MCF 10A (cell line): ENCODE measurements at regions of chr2 and their contacts with region 1.

Region 1: DNA sequence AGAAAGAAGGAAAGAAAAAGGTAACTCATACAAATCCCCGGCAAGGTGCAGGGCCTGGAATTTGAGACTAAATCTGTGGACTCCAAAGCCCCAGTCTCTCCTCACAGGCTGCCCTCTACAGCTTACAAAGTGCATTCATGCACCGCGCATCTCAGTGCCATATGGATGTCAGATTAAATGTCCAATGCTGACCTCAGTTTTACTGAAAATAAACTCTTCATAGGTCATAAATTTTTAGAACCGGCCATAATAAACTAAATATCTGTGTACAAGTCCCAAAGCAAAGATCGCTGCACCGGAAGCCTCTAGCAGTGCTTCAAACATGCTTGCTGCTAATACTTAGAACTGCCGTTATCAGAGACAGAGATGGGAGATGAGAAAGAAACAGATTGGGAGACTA is 17.7 kb downstream of the ST6GAL2 start:
- DNase-seq: no peak
- H3K4me3 Mint-ChIP-seq: no peak overlapping the region
- H3K27ac Mint-ChIP-seq: no peak overlapping the region
- H3K4me1 Mint-ChIP-seq: peaks cover 15% of the 10 kb centered on the region
- H3K27me3 Mint-ChIP-seq: no peaks in the 10 kb centered on the region
- CTCF ChIP-seq: peak; percentile 21

Region 2: DNA sequence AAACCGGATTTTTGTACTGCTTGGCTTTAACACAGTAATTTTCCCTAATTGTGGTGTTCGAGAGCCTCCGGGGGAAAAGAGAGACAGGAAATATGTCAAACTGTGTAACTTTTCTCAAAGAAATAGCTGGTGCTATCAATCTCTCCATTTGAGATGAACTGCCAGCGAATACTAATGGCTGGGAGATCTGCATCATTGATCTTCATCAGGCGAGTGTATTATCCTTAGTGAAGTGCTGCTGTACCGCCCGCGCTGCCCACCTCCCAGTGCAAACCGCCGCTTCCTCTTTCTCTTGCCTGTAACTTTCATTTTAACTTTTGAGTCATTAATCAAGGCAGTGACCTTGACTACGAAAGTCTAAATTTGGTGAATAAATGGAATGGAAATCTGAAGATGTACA is 263.8 kb after region 1 on chr2:
- CTCF ChIA-PET with region 1: no interaction called
- POLR2A ChIA-PET with region 1: no interaction called
- intact Hi-C with region 1: loop called (anchors 10 kb)
- DNase-seq: no peak
- H3K4me3 Mint-ChIP-seq: no peak overlapping the region
- H3K27ac Mint-ChIP-seq: no peak overlapping the region
- H3K4me1 Mint-ChIP-seq: no peaks in the 10 kb centered on the region
- H3K27me3 Mint-ChIP-seq: no peaks in the 10 kb centered on the region
- CTCF ChIP-seq: no peak

Region 3: DNA sequence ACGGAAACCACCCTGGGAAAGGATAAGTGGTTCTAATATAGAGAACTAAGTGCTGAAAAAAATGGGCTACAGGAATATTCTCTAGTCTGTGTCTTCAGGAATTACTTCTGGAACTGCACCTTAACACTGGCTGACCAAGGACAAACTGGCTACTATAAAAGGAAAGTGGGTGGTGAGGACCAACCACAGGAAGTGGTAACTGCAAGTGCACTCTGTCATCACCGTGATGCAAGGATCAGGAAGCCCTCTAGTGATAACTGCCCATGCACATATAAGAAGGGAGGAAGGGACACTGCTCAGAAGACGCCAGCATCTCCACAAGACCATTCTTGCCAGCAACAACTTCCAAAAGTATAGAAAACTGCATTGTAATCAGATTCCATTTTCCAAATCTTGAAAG is 534.1 kb after region 1 on chr2:
- CTCF ChIA-PET with region 1: no interaction called
- POLR2A ChIA-PET with region 1: no interaction called
- intact Hi-C with region 1: loop called (anchors 10 kb)
- DNase-seq: no peak
- H3K4me3 Mint-ChIP-seq: no peak overlapping the region
- H3K27ac Mint-ChIP-seq: no peak overlapping the region
- H3K4me1 Mint-ChIP-seq: no peaks in the 10 kb centered on the region
- H3K27me3 Mint-ChIP-seq: no peaks in the 10 kb centered on the region
- CTCF ChIP-seq: no peak

Region 4: GRCh38 chr2:107669335-107669734 is 801.1 kb after region 1 on chr2:
- CTCF ChIA-PET with region 1: interaction called, 3 read pairs
- POLR2A ChIA-PET with region 1: interaction called, 3 read pairs
- intact Hi-C with region 1: loop called (anchors 1 kb)
- DNase-seq: peak; percentile 37
- H3K4me3 Mint-ChIP-seq: no peak overlapping the region
- H3K27ac Mint-ChIP-seq: no peak overlapping the region
- H3K4me1 Mint-ChIP-seq: no peaks in the 10 kb centered on the region
- H3K27me3 Mint-ChIP-seq: no peaks in the 10 kb centered on the region
- CTCF ChIP-seq: peak; percentile 53